Activated CD4-positive, alpha-beta memory T cell treated with anti-CD3 and anti-CD28 coated beads, Interleukin-2, amount 10 ng/mL, durations not matched to agents 7 days and 5 days (primary cell): ENCODE measurements at regions of chr16 and their contacts with region 1.

Region 1: GRCh38 chr16:19521471-19522396 is at the start of gene GDE1:
- DNase-seq: peak; percentile 94
- H3K4me3 Mint-ChIP-seq: peak within 1 kb of the TSS; percentile 93
- H3K27ac Mint-ChIP-seq: peak within 1 kb of the TSS; percentile 89
- H3K4me1 Mint-ChIP-seq: peaks cover 67% of the 10 kb centered on the region
- H3K27me3 Mint-ChIP-seq: no peaks in the 10 kb centered on the region
- total RNA-seq, gene GDE1: 54.6 to 55.4 TPM

Region 2: GRCh38 chr16:19284207-19284606 is 237.5 kb before region 1 on chr16:
- CTCF ChIA-PET with region 1: no interaction called
- POLR2A ChIA-PET with region 1: no interaction called
- DNase-seq: no peak
- H3K4me3 Mint-ChIP-seq: no peak overlapping the region
- H3K27ac Mint-ChIP-seq: no peak overlapping the region
- H3K4me1 Mint-ChIP-seq: no peaks in the 10 kb centered on the region
- H3K27me3 Mint-ChIP-seq: no peaks in the 10 kb centered on the region

Region 3: DNA sequence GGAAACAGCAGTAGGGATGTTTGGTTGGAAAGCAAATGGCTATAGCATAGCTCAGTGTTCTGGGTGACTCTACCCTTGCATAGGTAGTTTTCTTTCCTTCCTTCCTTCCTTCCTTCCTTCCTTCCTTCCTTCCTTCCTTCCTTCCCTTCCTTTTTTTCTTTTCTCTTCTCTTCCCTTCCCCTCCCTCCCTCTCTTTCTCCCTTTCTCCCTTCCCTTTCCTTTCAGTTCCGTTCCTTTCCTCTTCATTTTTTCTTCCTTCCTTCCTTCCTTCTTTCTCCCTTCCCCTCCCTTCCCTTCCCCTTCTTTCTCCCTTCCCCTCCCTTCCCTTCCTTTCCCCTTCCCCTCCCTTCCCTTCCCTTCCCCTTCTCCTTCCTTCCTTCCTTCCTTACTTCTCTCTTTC is 31.1 kb before region 1 on chr16:
- CTCF ChIA-PET with region 1: no interaction called
- POLR2A ChIA-PET with region 1: no interaction called
- DNase-seq: no peak
- H3K4me3 Mint-ChIP-seq: no peak overlapping the region
- H3K27ac Mint-ChIP-seq: no peak overlapping the region
- H3K4me1 Mint-ChIP-seq: peaks cover 12% of the 10 kb centered on the region
- H3K27me3 Mint-ChIP-seq: no peaks in the 10 kb centered on the region

Region 4: DNA sequence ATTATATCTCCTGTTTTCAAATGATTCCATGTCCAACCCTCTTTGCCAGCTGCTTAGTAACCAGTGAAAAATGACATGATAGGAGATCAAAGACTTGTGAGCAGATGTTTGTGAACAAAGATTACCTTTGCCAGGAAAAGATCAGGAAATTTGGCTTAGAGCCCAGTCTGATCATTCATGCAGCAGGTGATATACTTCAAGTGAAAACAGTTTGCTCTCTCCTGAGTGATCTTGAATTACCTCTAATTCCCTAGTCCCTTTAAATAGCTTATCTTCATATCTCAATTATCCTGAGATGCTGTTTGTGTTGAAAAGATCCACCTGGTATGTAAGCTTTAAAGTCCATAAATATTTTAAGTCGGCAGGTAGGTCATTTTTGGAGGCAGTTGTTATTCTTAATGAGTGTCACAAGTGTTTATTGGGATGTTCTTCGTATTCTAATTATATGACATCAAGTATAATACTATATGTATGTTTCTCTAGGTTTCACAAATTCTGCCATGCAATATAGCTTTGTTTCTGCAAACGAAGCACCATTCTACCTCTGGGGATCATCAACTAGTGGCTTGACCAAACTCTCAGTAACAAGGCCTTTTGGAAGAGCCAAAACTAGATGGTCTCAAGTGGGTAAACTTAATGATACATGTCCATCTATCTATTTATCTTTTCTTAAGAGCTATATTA is 20.5 kb after region 1 on chr16:
- CTCF ChIA-PET with region 1: no interaction called
- POLR2A ChIA-PET with region 1: interaction called, 22 read pairs
- DNase-seq: no peak
- H3K4me3 Mint-ChIP-seq: no peak overlapping the region
- H3K27ac Mint-ChIP-seq: no peak overlapping the region
- H3K4me1 Mint-ChIP-seq: peaks cover 19% of the 10 kb centered on the region
- H3K27me3 Mint-ChIP-seq: no peaks in the 10 kb centered on the region

Region 5: GRCh38 chr16:19601083-19601976 is 79.6 kb after region 1 on chr16:
- CTCF ChIA-PET with region 1: no interaction called
- POLR2A ChIA-PET with region 1: no interaction called
- DNase-seq: peak; percentile 39
- H3K4me3 Mint-ChIP-seq: no peak overlapping the region
- H3K27ac Mint-ChIP-seq: peak overlapping the region; percentile 21
- H3K4me1 Mint-ChIP-seq: peaks cover 2% of the 10 kb centered on the region
- H3K27me3 Mint-ChIP-seq: no peaks in the 10 kb centered on the region